Activated CD4-positive, alpha-beta memory T cell treated with anti-CD3 and anti-CD28 coated beads, Interleukin-2, amount 10 ng/mL, durations not matched to agents 7 days and 5 days (primary cell): ENCODE measurements at regions of chr2 and their contacts with region 1.

Region 1: GRCh38 chr2:69628325-69629021 is 15.1 kb downstream of the AAK1 start:
- DNase-seq: no peak
- H3K4me3 Mint-ChIP-seq: no peak overlapping the region
- H3K27ac Mint-ChIP-seq: no peak overlapping the region
- H3K4me1 Mint-ChIP-seq: peaks cover 20% of the 10 kb centered on the region
- H3K27me3 Mint-ChIP-seq: no peaks in the 10 kb centered on the region

Region 2: DNA sequence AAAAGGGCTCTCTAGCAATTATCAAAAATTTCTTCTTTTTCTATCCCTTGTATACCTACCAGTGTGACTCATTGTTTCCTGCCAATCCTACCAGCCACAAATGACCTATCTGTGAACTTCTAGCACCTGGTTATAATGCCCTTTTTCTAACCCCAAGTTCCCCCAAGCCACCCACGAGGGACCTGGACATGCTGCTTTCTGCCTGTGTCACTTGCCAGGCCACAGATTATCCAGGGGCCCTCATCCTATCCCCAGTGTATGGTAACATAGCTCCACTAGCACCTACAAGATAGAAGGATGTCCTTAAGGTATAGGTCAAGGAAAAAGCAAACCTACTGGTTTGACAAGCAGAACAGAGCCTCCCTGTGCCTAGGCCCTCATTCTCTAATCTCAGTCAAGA is 11.7 kb before region 1 on chr2:
- CTCF ChIA-PET with region 1: interaction called, 7 read pairs
- POLR2A ChIA-PET with region 1: interaction called, 10 read pairs
- DNase-seq: peak; percentile 61
- H3K4me3 Mint-ChIP-seq: no peak overlapping the region
- H3K27ac Mint-ChIP-seq: peak overlapping the region; percentile 4
- H3K4me1 Mint-ChIP-seq: peaks cover 38% of the 10 kb centered on the region
- H3K27me3 Mint-ChIP-seq: no peaks in the 10 kb centered on the region